B cell (primary cell): ENCODE measurements at regions of chr4 and their contacts with region 1.

Region 1: GRCh38 chr4:53377319-53378170 is at the start of gene FIP1L1:
- DNase-seq: peak; percentile 97
- ATAC-seq: peak; percentile 92
- H3K4me3 ChIP-seq: peak within 1 kb of the TSS; percentile 74 to 95 (median 85)
- H3K4me3 Mint-ChIP-seq: peak within 1 kb of the TSS; percentile 100
- H3K27ac ChIP-seq: peak within 1 kb of the TSS; percentile 79 to 88
- H3K27ac Mint-ChIP-seq: peak within 1 kb of the TSS; percentile 99
- H3K4me1 ChIP-seq: peaks cover 7 to 28% of the 10 kb centered on the region in 2 donors
- H3K4me1 Mint-ChIP-seq: peaks cover 33% of the 10 kb centered on the region
- H3K27me3 ChIP-seq: peaks cover 0 to 2% (median 0%) of the 10 kb centered on the region in 4 experiments
- H3K27me3 Mint-ChIP-seq: no peaks in the 10 kb centered on the region
- CTCF ChIP-seq: no peak
- total RNA-seq, gene FIP1L1: 79.3 and 84.8 TPM in 2 replicates

Region 2: GRCh38 chr4:51853027-51853682 is 1524.4 kb before region 1 on chr4:
- CTCF ChIA-PET with region 1: no interaction called
- POLR2A ChIA-PET with region 1: no interaction called
- intact Hi-C with region 1: no loop called
- DNase-seq: no peak
- ATAC-seq: no peak
- H3K4me3 ChIP-seq: no peak overlapping the region
- H3K4me3 Mint-ChIP-seq: no peak overlapping the region
- H3K27ac ChIP-seq: no peak overlapping the region
- H3K27ac Mint-ChIP-seq: no peak overlapping the region
- H3K4me1 ChIP-seq: peaks cover 5 to 6% of the 10 kb centered on the region in 2 donors
- H3K4me1 Mint-ChIP-seq: peaks cover 32% of the 10 kb centered on the region
- H3K27me3 ChIP-seq: no peaks in the 10 kb centered on the region
- H3K27me3 Mint-ChIP-seq: no peaks in the 10 kb centered on the region
- CTCF ChIP-seq: no peak

Region 3: DNA sequence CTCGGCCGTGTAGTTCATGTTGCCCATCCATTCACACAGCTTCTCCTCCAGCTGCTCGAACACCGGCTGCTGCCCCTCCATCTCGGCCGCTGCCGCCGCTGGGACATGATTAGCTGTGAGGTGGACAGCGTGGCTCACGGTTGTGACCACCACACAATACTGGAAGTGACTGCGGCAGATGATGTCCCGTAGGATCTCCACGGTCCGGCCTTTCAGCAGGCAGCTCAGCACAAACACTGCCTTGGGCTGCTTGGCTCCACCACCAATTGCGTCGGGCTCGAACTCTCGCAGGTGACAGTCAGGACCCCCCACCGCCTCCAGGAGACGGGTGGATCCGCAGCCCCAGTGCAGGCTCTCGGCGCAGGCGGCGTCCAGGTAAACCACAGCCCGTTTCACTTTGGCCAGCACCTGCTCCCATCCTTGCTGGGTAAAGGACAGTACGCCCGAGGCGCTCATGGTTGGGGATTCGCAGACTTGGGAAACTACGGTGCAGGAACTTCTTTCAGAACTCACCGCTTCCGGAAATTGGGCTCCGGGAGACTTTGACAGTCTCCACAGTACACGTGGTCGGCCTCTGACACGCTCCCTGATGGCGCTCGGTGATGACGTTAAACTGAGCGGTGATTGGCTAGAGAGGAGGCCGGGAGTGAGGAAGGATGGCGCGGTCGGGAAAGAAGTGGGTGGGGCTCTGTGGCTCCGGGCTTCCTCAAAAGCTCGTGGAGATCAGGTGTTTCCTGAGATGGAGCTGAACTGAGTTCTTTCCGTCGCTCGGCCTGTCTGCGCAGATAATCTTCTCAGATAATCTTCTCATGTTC is 11.9 kb before region 1 on chr4 and contains the start of gene SCFD2:
- CTCF ChIA-PET with region 1: interaction called, 4 read pairs
- POLR2A ChIA-PET with region 1: no interaction called
- intact Hi-C with region 1: loop called (anchors 1 kb)
- DNase-seq: peak; percentile 97
- ATAC-seq: peak; percentile 98
- H3K4me3 ChIP-seq: peak within 1 kb of the TSS; percentile 82 to 97 (median 91)
- H3K4me3 Mint-ChIP-seq: peak within 1 kb of the TSS; percentile 96
- H3K27ac ChIP-seq: peak within 1 kb of the TSS; percentile 64 to 92
- H3K27ac Mint-ChIP-seq: peak within 1 kb of the TSS; percentile 95
- H3K4me1 ChIP-seq: peaks cover 16 to 21% of the 10 kb centered on the region in 2 donors
- H3K4me1 Mint-ChIP-seq: peaks cover 45% of the 10 kb centered on the region
- H3K27me3 ChIP-seq: peaks cover 0 to 4% (median 1%) of the 10 kb centered on the region in 4 experiments
- H3K27me3 Mint-ChIP-seq: peaks cover 22% of the 10 kb centered on the region
- CTCF ChIP-seq: no peak
- total RNA-seq, gene SCFD2: 20.4 and 20.9 TPM in 2 replicates

Region 4: GRCh38 chr4:53432528-53433424 is 55.2 kb after region 1 on chr4:
- CTCF ChIA-PET with region 1: interaction called, 4 read pairs
- POLR2A ChIA-PET with region 1: no interaction called
- intact Hi-C with region 1: loop called (anchors 10 kb)
- DNase-seq: no peak
- ATAC-seq: no peak
- H3K4me3 ChIP-seq: no peak overlapping the region
- H3K4me3 Mint-ChIP-seq: no peak overlapping the region
- H3K27ac ChIP-seq: no peak overlapping the region
- H3K27ac Mint-ChIP-seq: no peak overlapping the region
- H3K4me1 ChIP-seq: no peaks in the 10 kb centered on the region
- H3K4me1 Mint-ChIP-seq: peaks cover 2% of the 10 kb centered on the region
- H3K27me3 ChIP-seq: no peaks in the 10 kb centered on the region
- H3K27me3 Mint-ChIP-seq: no peaks in the 10 kb centered on the region
- CTCF ChIP-seq: no peak